T-cell (primary cell): ENCODE measurements at regions of chr5 and their contacts with region 1.

Region 1: GRCh38 chr5:146662229-146662628 is 146.2 kb upstream of the GPR151 start:
- DNase-seq: peak in 7 of 35 experiments; percentile 4 to 68 (median 21)
- ATAC-seq: no peak
- H3K4me3 ChIP-seq: no peak overlapping the region
- H3K4me3 Mint-ChIP-seq: no peak overlapping the region
- H3K27ac ChIP-seq: no peak overlapping the region
- H3K27ac Mint-ChIP-seq: no peak overlapping the region
- H3K4me1 ChIP-seq: no peaks in the 10 kb centered on the region
- H3K4me1 Mint-ChIP-seq: peaks cover 0 to 10% (median 8%) of the 10 kb centered on the region in 3 donors
- H3K27me3 ChIP-seq: no peaks in the 10 kb centered on the region
- H3K27me3 Mint-ChIP-seq: no peaks in the 10 kb centered on the region

Region 2: GRCh38 chr5:146188358-146188757 is 473.9 kb before region 1 on chr5:
- CTCF ChIA-PET with region 1: no interaction called
- POLR2A ChIA-PET with region 1: interaction called in 1 of 2 experiments, 10 read pairs
- DNase-seq: no peak
- ATAC-seq: no peak
- H3K4me3 ChIP-seq: no peak overlapping the region
- H3K4me3 Mint-ChIP-seq: no peak overlapping the region
- H3K27ac ChIP-seq: no peak overlapping the region
- H3K27ac Mint-ChIP-seq: no peak overlapping the region
- H3K4me1 ChIP-seq: peaks cover 0 to 2% of the 10 kb centered on the region in 2 experiments
- H3K4me1 Mint-ChIP-seq: no peaks in the 10 kb centered on the region
- H3K27me3 ChIP-seq: peaks cover 0 to 8% of the 10 kb centered on the region in 2 experiments
- H3K27me3 Mint-ChIP-seq: peaks cover 4 to 14% of the 10 kb centered on the region in 2 donors